ENCODE measurements at regions of chr11 and their contacts with region 1.

Region 1: GRCh38 chr11:61733120-61733978 is 19.1 kb upstream of the MYRF start:
- DNase-seq: peak; percentile 9
- H3K4me3 ChIP-seq: no peak overlapping the region
- H3K27ac ChIP-seq: peak overlapping the region in 3 of 4 donors; percentile 43 to 57 (median 49)
- H3K4me1 ChIP-seq: peaks cover 8 to 54% (median 17%) of the 10 kb centered on the region in 3 donors
- H3K27me3 ChIP-seq: no peaks in the 10 kb centered on the region
- CTCF ChIP-seq: peak; percentile 96 to 100 (median 99)
- POLR2A ChIP-seq: no peak

Region 2: DNA sequence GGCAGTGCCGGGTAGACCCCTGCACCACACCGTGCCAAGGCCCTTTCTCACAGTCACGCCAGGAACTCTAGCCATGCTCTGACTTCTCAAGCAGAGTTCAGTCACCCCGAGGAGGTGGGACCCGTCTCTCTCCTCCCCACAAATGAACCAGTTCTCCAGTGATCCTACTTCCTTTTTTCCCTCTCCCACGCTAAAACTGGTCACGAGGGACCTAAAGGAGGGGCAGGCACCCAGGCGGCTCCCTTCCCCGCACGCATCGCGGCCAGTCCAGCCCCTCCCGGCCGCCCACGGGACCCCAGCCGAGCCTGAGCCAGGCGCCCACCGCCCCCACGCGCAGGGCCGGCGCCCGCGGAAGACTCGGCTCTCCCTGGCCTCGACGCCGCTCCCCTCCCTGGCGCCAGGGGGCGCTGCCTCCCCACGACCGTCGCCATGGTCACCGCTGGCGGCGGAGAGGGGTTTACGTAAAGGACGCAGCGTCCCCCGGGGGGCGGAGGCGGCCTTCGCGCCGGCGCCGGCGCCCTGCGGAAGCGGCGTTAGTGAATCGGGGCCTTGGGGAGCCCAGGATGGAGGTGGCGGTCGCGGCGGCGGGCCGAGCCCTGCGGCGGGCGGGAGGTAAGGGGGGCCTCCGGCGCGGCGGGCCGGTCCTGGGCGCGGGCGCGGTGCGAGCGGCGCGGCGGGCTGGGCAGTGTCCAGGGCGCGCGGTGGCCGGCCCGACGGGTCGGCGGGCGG is 53.3 kb before region 1 on chr11 and contains the start of gene DAGLA:
- intact Hi-C with region 1: loop called (anchors 2 kb)
- DNase-seq: no peak
- H3K4me3 ChIP-seq: peak within 1 kb of the TSS; percentile 40 to 73 (median 50)
- H3K27ac ChIP-seq: peak within 1 kb of the TSS in 3 of 4 donors; percentile 40 to 57 (median 55)
- H3K4me1 ChIP-seq: peaks cover 13 to 63% (median 17%) of the 10 kb centered on the region in 3 donors
- H3K27me3 ChIP-seq: peaks cover 0 to 83% (median 0%) of the 10 kb centered on the region in 4 donors
- CTCF ChIP-seq: peak; percentile 82 to 99 (median 98)
- POLR2A ChIP-seq: no peak
- total RNA-seq, gene DAGLA: 1.7 to 6.9 (median 2.9) TPM

Region 3: GRCh38 chr11:61860054-61860903 is 126.9 kb after region 1 on chr11:
- intact Hi-C with region 1: no loop called
- DNase-seq: no peak
- H3K4me3 ChIP-seq: no peak overlapping the region
- H3K27ac ChIP-seq: no peak overlapping the region
- H3K4me1 ChIP-seq: peaks cover 0 to 8% (median 0%) of the 10 kb centered on the region in 3 donors
- H3K27me3 ChIP-seq: no peaks in the 10 kb centered on the region
- CTCF ChIP-seq: no peak
- POLR2A ChIP-seq: no peak

Measured in esophagus squamous epithelium (tissue), 5 donors.